ENCODE measurements at regions of chr6 and their contacts with region 1.

Region 1: GRCh38 chr6:142146828-142147662 is at the starts of genes NMBR and VTA1:
- DNase-seq: peak; percentile 95
- H3K4me3 ChIP-seq: peak within 1 kb of the TSS; percentile 92
- H3K27ac ChIP-seq: peak within 1 kb of the TSS; percentile 25; the same call in 1 of the 2 replicates
- H3K4me1 ChIP-seq: peaks cover 19% of the 10 kb centered on the region; the same call in 1 of the 2 replicates
- H3K27me3 ChIP-seq: no peaks in the 10 kb centered on the region
- CTCF ChIP-seq: peak; percentile 84
- total RNA-seq, gene NMBR: 0.35 TPM in 1 of 2 replicates, not detected in the other
- total RNA-seq, gene VTA1: 29.5 and 52.0 TPM in 2 replicates

Region 2: DNA sequence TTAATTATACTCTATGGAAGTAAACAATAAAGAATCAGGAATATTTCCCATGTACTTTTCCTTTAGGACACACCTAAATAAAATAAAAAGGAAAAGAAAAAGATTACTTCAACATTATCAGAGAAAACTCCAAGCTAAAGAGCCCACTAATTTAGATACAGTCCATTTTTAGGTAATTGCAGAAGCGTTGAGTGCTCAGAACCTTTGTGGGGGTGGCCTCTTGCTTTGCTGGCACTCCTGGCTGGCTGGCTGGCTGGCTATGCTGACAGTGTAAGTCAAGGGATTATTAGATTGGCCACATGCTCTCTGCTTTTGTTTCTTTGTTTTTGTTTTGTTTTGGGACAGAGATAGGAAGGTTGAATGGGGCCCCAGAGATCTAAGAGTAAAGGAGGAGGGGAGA is 14.4 kb before region 1 on chr6 and contains the start of gene GJE1:
- CTCF ChIA-PET with region 1: no interaction called
- POLR2A ChIA-PET with region 1: no interaction called
- intact Hi-C with region 1: no loop called
- DNase-seq: no peak
- H3K4me3 ChIP-seq: no peak within 1 kb of the TSS
- H3K27ac ChIP-seq: no peak within 1 kb of the TSS
- H3K4me1 ChIP-seq: no peaks in the 10 kb centered on the region
- H3K27me3 ChIP-seq: no peaks in the 10 kb centered on the region
- CTCF ChIP-seq: no peak
- total RNA-seq, gene GJE1: not detected in 2 replicates

Region 3: GRCh38 chr6:142301651-142302370 is 154.8 kb after region 1 on chr6 and contains the start of gene ADGRG6:
- CTCF ChIA-PET with region 1: no interaction called
- POLR2A ChIA-PET with region 1: no interaction called
- intact Hi-C with region 1: loop called (anchors 5 kb)
- DNase-seq: peak; percentile 61
- H3K4me3 ChIP-seq: peak within 1 kb of the TSS; percentile 88
- H3K27ac ChIP-seq: peak within 1 kb of the TSS; percentile 78
- H3K4me1 ChIP-seq: peaks cover 41% of the 10 kb centered on the region
- H3K27me3 ChIP-seq: no peaks in the 10 kb centered on the region
- CTCF ChIP-seq: no peak
- total RNA-seq, gene ADGRG6: 24.0 and 30.3 TPM in 2 replicates

Region 4: DNA sequence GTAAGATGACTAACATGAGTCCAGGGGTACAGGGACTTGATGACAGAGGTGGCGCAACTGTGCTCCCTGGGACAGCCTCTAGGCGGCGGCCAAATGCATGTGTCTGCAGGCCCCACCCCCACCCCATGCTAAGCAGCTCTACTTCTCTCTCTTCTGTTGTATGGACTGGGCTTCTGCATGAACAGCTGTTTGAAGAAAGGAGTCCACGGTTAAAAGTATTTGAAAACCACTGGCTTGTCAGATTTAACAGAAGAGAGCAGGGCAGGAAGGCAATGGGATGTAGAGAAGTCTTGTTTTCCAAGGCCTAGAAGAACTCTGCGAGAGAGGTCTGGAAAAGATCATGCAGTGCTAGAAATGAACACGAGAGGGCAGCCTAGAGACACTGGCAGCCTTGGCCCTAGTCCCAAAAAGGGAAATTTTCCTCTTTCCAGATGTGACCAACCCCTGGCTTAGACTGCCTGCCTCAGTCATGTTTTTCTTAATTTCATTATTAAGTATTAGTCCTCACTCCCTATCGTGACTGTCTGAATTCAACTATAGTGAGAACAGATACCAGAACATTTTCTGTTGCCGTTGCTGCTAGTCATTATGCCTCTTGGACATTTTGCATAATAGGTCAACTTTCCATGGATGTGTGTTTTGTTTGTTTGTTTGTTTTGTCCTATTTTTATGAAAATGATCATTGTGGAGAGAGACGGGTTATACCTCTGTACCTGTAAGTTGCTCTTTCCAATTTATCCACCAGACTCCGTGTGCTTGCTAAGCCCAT is 419.8 kb after region 1 on chr6:
- CTCF ChIA-PET with region 1: no interaction called
- POLR2A ChIA-PET with region 1: no interaction called
- intact Hi-C with region 1: loop called (anchors 10 kb)
- DNase-seq: peak; percentile 44 to 56
- H3K4me3 ChIP-seq: no peak overlapping the region
- H3K27ac ChIP-seq: no peak overlapping the region
- H3K4me1 ChIP-seq: peaks cover 20% of the 10 kb centered on the region
- H3K27me3 ChIP-seq: no peaks in the 10 kb centered on the region
- CTCF ChIP-seq: peak; percentile 90

Region 5: DNA sequence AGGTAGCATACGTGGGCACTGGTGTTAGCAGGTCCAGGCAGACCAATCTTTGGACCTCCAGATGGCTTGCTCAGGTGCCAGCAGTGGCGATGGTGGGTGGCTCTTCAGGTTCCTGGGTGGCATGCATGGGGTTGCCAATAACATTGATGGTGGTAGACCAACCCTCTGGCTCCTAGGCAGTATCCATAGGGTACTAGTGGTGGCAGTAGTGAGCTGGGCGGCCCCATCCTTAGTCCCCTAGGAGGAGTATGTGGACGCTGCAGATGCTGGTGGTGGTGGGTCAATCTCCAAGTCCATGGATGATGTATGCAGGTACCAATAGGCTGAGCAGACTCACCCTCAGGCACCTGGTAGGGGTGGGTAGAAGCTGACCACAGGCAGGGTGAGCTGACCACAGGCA is 1787.8 kb after region 1 on chr6:
- CTCF ChIA-PET with region 1: no interaction called
- POLR2A ChIA-PET with region 1: interaction called, 10 read pairs
- intact Hi-C with region 1: no loop called
- DNase-seq: no peak
- H3K4me3 ChIP-seq: no peak overlapping the region
- H3K27ac ChIP-seq: no peak overlapping the region
- H3K4me1 ChIP-seq: no peaks in the 10 kb centered on the region
- H3K27me3 ChIP-seq: no peaks in the 10 kb centered on the region
- CTCF ChIP-seq: no peak

Measured in PC-9 (cell line).